ENCODE measurements at regions of chr16 and their contacts with region 1.

Region 1: GRCh38 chr16:75011634-75012307 is 12.9 kb downstream of the ZNRF1 start:
- DNase-seq: peak; percentile 83
- ATAC-seq: peak; percentile 93
- H3K4me3 ChIP-seq: peak overlapping the region; percentile 29; the same call in 1 of the 2 replicates
- H3K27ac ChIP-seq: peak overlapping the region; percentile 76
- H3K4me1 ChIP-seq: peaks cover 24% of the 10 kb centered on the region
- H3K27me3 ChIP-seq: no peaks in the 10 kb centered on the region
- CTCF ChIP-seq: no peak

Region 2: DNA sequence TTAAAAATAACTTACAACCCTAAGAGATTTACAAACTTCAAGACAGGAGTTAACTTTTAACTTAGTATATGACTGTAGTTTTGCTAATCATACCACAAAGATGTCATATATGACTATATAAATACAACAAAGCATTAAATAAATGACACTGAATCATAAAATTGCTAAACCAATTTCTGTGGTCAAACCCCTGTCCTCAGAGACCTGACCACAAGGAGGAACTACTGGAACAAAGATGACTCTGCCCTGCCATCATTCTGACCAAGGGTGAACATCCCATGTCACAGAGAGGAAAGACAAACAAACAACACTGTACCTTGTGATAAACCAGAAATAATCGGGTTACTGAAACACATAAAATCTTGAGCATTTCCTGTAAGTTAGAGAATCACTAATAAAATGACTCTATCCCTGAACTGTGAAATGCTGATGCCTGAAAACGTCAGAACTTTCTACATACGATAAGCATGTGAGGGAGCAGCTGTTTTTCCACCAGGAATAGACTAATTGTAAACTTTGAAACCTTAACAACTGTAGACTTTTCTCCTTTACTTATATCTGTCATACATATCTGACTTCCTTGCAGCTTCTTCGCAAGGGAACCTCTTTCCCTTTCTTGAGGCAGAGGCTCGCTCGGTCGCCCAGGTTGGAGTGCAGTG is 74.7 kb before region 1 on chr16:
- CTCF ChIA-PET with region 1: no interaction called
- POLR2A ChIA-PET with region 1: no interaction called
- intact Hi-C with region 1: no loop called
- DNase-seq: peak; percentile 93
- ATAC-seq: peak; percentile 100
- H3K4me3 ChIP-seq: no peak overlapping the region
- H3K27ac ChIP-seq: peak overlapping the region; percentile 99
- H3K4me1 ChIP-seq: peaks cover 22% of the 10 kb centered on the region
- H3K27me3 ChIP-seq: no peaks in the 10 kb centered on the region
- CTCF ChIP-seq: no peak

Region 3: GRCh38 chr16:75064403-75065148 is 52.8 kb after region 1 on chr16:
- CTCF ChIA-PET with region 1: no interaction called
- POLR2A ChIA-PET with region 1: no interaction called
- intact Hi-C with region 1: loop called (anchors 5 kb)
- DNase-seq: peak; percentile 74
- ATAC-seq: peak; percentile 27
- H3K4me3 ChIP-seq: peak overlapping the region; percentile 28; the same call in 1 of the 2 replicates
- H3K27ac ChIP-seq: peak overlapping the region; percentile 81
- H3K4me1 ChIP-seq: peaks cover 22% of the 10 kb centered on the region
- H3K27me3 ChIP-seq: no peaks in the 10 kb centered on the region
- CTCF ChIP-seq: no peak